ENCODE measurements at regions of chr3 and their contacts with region 1.

Region 1: DNA sequence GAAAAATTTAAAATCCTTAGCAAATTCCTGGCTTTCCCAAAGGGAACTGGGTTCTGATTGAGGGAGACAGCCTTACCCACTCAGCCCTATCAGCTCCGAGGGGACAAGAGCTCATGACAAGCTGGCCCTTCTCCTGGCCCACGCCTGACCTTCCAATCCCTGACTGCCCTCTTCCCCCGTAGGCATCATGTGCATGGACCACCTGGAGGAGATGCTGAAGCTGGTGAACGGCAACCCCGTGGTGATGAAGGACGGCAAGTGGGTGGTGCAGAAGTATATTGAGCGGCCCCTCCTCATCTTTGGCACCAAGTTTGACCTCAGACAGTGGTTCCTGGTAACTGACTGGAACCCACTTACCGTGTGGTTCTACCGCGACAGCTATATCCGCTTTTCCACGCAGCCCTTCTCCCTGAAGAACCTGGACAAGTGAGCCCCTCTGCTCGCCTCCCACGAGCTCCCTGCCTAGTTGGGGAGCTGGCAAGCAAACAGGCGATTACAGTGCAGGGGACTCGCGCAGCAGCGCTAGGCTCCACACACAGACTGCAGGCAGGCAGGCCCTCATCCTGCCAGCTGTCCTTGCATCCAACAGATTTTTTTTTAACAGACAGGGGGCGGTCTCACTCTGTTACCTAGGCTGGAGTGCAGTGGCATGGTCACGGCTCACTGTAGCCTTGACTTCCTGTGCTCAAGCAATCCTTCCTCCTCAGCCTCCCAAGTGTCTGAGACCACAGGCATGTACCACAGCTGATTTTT is 16.8 kb downstream of the RPUSD3 start:
- DNase-seq: peak in 2 of 4 experiments; percentile 33 to 62
- ATAC-seq: peak; percentile 88
- H3K4me3 ChIP-seq: no peak overlapping the region
- H3K27ac ChIP-seq: no peak overlapping the region
- H3K4me1 ChIP-seq: peaks cover 0 to 11% of the 10 kb centered on the region in 2 experiments; a peak in 2 of 5 replicates
- H3K27me3 ChIP-seq: no peaks in the 10 kb centered on the region
- CTCF ChIP-seq: peak; percentile 41 to 63 (median 55); a peak in 5 of 6 replicates
- EP300 ChIP-seq: no peak
- POLR2A ChIP-seq: 0 out of 2 replicates have a peak, but pooled peaks have one; percentile 3
- RAD21 ChIP-seq: peak; percentile 25 to 55; a peak in 3 of 4 replicates

Region 2: GRCh38 chr3:9669720-9670432 is 157.1 kb before region 1 on chr3:
- CTCF ChIA-PET with region 1: no interaction called
- POLR2A ChIA-PET with region 1: no interaction called
- in situ Hi-C with region 1: no loop called
- intact Hi-C with region 1: no loop called
- DNase-seq: no peak
- ATAC-seq: no peak
- H3K4me3 ChIP-seq: no peak overlapping the region
- H3K27ac ChIP-seq: no peak overlapping the region
- H3K4me1 ChIP-seq: no peaks in the 10 kb centered on the region
- H3K27me3 ChIP-seq: no peaks in the 10 kb centered on the region
- CTCF ChIP-seq: no peak
- EP300 ChIP-seq: no peak
- POLR2A ChIP-seq: no peak
- RAD21 ChIP-seq: no peak

Region 3: DNA sequence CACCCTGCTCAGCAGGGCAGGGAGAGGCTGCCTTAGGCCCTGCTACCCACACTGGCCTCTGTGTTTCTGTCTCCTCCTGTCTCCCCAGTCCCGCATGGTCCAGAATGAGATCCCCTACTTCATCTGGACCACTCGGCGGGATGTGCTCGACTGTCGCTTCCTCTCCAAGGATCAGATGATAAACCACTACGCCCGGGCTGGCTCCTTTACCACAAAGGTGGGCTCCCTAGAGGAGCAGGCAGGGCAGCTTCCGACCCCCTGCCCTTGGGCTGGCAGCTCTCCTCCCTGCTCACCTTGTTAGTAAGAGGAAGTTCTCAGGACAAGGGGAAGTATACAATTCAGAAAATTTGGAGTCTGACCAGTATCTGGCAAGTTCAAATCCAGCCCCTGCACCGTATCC is 11.0 kb before region 1 on chr3:
- CTCF ChIA-PET with region 1: interaction called, 5 read pairs
- POLR2A ChIA-PET with region 1: interaction called, 18 read pairs
- in situ Hi-C with region 1: no loop called
- intact Hi-C with region 1: no loop called
- DNase-seq: no peak
- ATAC-seq: peak; percentile 16
- H3K4me3 ChIP-seq: no peak overlapping the region
- H3K27ac ChIP-seq: no peak overlapping the region
- H3K4me1 ChIP-seq: no peaks in the 10 kb centered on the region
- H3K27me3 ChIP-seq: no peaks in the 10 kb centered on the region
- CTCF ChIP-seq: no peak
- EP300 ChIP-seq: no peak
- POLR2A ChIP-seq: no peak
- RAD21 ChIP-seq: no peak

Region 4: GRCh38 chr3:9946112-9947024 is 119.4 kb after region 1 on chr3:
- CTCF ChIA-PET with region 1: no interaction called
- POLR2A ChIA-PET with region 1: no interaction called
- in situ Hi-C with region 1: no loop called
- intact Hi-C with region 1: no loop called
- DNase-seq: no peak
- ATAC-seq: no peak
- H3K4me3 ChIP-seq: no peak overlapping the region
- H3K27ac ChIP-seq: no peak overlapping the region
- H3K4me1 ChIP-seq: peaks cover under 1 to 31% of the 10 kb centered on the region in 2 experiments; a peak in 4 of 5 replicates
- H3K27me3 ChIP-seq: no peaks in the 10 kb centered on the region
- CTCF ChIP-seq: no peak
- EP300 ChIP-seq: no peak
- POLR2A ChIP-seq: no peak
- RAD21 ChIP-seq: no peak

Region 5: GRCh38 chr3:9957214-9957613 is 130.2 kb after region 1 on chr3:
- CTCF ChIA-PET with region 1: no interaction called
- POLR2A ChIA-PET with region 1: no interaction called
- in situ Hi-C with region 1: no loop called
- intact Hi-C with region 1: no loop called
- DNase-seq: peak in 1 of 4 experiments; percentile 38
- ATAC-seq: no peak
- H3K4me3 ChIP-seq: no peak overlapping the region
- H3K27ac ChIP-seq: no peak overlapping the region
- H3K4me1 ChIP-seq: peaks cover 14 to 21% of the 10 kb centered on the region in 2 experiments
- H3K27me3 ChIP-seq: no peaks in the 10 kb centered on the region
- CTCF ChIP-seq: peak in 1 of 3 experiments; percentile 22; a peak in 2 of 6 replicates
- EP300 ChIP-seq: no peak
- POLR2A ChIP-seq: no peak
- RAD21 ChIP-seq: 0 out of 4 replicates have a peak, but pooled peaks of 1 of the 2 experiments have one; percentile 13

Measured in K562 (cell line).